GM13977 (cell line): ENCODE measurements at regions of chr2 and their contacts with region 1.

Region 1: GRCh38 chr2:217713395-217714286 is 289.2 kb downstream of the TNS1 start:
- DNase-seq: peak; percentile 74
- CTCF ChIP-seq: peak; percentile 96

Region 2: GRCh38 chr2:216698895-216699294 is 1014.7 kb before region 1 on chr2:
- in situ Hi-C with region 1: loop called (anchors 25 kb)
- DNase-seq: peak; percentile 63
- CTCF ChIP-seq: peak; percentile 64

Region 3: DNA sequence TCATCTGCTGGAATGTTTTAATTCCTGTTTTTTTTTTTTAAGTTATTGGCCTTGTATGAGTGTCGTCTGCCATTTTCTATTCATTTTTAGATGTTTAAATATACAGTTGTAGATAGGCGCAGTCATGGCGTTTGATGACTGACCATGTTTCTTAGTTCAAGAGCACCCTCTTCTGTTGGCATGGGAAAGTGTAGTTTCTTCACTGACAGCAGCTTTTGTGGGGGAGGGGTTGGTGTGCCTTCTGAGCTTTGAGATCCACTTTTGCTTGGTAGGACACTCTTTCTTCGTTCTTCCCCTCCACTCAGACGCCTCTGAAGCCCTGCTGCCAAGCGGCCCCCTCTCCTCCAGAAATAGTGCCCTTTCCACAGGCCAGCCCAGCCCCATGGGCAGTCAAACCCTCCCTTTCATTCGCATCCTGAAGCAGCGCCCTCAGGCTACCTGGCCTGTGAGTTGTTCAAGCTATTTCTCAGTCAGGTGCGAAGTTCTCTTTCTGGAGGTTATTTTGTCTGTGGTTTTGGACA is 202.8 kb before region 1 on chr2:
- in situ Hi-C with region 1: loop called (anchors 25 kb)
- DNase-seq: peak; percentile 77
- CTCF ChIP-seq: peak; percentile 73